Panc1 (cell line): ENCODE measurements at regions of chr4 and their contacts with region 1.

Region 1: GRCh38 chr4:36152735-36153134 is 91.6 kb downstream of the ARAP2 start:
- DNase-seq: no peak
- ATAC-seq: no peak
- H3K4me3 ChIP-seq: no peak overlapping the region
- H3K27ac ChIP-seq: no peak overlapping the region
- H3K4me1 ChIP-seq: no peaks in the 10 kb centered on the region
- H3K27me3 ChIP-seq: no peaks in the 10 kb centered on the region
- CTCF ChIP-seq: no peak

Region 2: DNA sequence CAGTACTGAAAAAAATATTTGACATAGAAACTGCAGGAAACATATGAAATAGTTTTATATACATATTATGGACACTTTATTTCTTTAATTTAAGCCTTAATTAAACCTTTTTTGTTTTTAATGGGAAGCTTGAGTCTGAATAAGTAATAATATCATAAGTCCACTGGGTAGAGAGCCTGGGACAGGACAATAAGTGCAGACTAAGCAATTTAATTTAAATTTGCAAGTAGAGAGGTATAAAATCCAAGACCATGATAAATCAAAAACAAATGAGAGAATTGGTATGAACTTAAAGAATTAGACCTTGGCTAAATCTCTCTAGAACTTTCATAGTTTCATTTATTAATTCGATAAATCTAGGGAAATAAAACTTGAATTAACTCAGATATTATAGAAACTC is 479.6 kb before region 1 on chr4:
- CTCF ChIA-PET with region 1: no interaction called
- POLR2A ChIA-PET with region 1: no interaction called
- in situ Hi-C with region 1: no loop called
- intact Hi-C with region 1: no loop called
- DNase-seq: no peak
- ATAC-seq: no peak
- H3K4me3 ChIP-seq: no peak overlapping the region
- H3K27ac ChIP-seq: no peak overlapping the region
- H3K4me1 ChIP-seq: no peaks in the 10 kb centered on the region
- H3K27me3 ChIP-seq: no peaks in the 10 kb centered on the region
- CTCF ChIP-seq: no peak

Region 3: GRCh38 chr4:36224972-36225903 is 72.5 kb after region 1 on chr4:
- CTCF ChIA-PET with region 1: no interaction called
- POLR2A ChIA-PET with region 1: no interaction called
- in situ Hi-C with region 1: no loop called
- intact Hi-C with region 1: no loop called
- DNase-seq: no peak
- ATAC-seq: peak; percentile 63; the same call in 1 of the 2 replicates
- H3K4me3 ChIP-seq: no peak overlapping the region
- H3K27ac ChIP-seq: peak overlapping the region; percentile 29
- H3K4me1 ChIP-seq: peaks cover 5% of the 10 kb centered on the region; the same call in 1 of the 2 replicates
- H3K27me3 ChIP-seq: no peaks in the 10 kb centered on the region
- CTCF ChIP-seq: no peak

Region 4: GRCh38 chr4:36292556-36293188 is 139.9 kb after region 1 on chr4:
- CTCF ChIA-PET with region 1: no interaction called
- POLR2A ChIA-PET with region 1: no interaction called
- in situ Hi-C with region 1: no loop called
- intact Hi-C with region 1: no loop called
- DNase-seq: no peak
- ATAC-seq: no peak
- H3K4me3 ChIP-seq: no peak overlapping the region
- H3K27ac ChIP-seq: no peak overlapping the region
- H3K4me1 ChIP-seq: no peaks in the 10 kb centered on the region
- H3K27me3 ChIP-seq: no peaks in the 10 kb centered on the region
- CTCF ChIP-seq: no peak

Region 5: GRCh38 chr4:36775544-36775943 is 622.8 kb after region 1 on chr4:
- CTCF ChIA-PET with region 1: no interaction called
- POLR2A ChIA-PET with region 1: no interaction called
- in situ Hi-C with region 1: no loop called
- intact Hi-C with region 1: loop called (anchors 5 kb)
- DNase-seq: no peak
- ATAC-seq: no peak
- H3K4me3 ChIP-seq: no peak overlapping the region
- H3K27ac ChIP-seq: no peak overlapping the region
- H3K4me1 ChIP-seq: no peaks in the 10 kb centered on the region
- H3K27me3 ChIP-seq: no peaks in the 10 kb centered on the region
- CTCF ChIP-seq: no peak